ENCODE measurements at regions of chr7 and their contacts with region 1.

Region 1: GRCh38 chr7:76393116-76394031 is 16.1 kb downstream of the SSC4D start:
- DNase-seq: peak; percentile 81
- H3K4me3 ChIP-seq: peak overlapping the region; percentile 29 to 61 (median 54)
- H3K27ac ChIP-seq: peak overlapping the region; percentile 49
- H3K4me1 ChIP-seq: peaks cover 17% of the 10 kb centered on the region
- H3K27me3 ChIP-seq: no peaks in the 10 kb centered on the region
- CTCF ChIP-seq: no peak

Region 2: DNA sequence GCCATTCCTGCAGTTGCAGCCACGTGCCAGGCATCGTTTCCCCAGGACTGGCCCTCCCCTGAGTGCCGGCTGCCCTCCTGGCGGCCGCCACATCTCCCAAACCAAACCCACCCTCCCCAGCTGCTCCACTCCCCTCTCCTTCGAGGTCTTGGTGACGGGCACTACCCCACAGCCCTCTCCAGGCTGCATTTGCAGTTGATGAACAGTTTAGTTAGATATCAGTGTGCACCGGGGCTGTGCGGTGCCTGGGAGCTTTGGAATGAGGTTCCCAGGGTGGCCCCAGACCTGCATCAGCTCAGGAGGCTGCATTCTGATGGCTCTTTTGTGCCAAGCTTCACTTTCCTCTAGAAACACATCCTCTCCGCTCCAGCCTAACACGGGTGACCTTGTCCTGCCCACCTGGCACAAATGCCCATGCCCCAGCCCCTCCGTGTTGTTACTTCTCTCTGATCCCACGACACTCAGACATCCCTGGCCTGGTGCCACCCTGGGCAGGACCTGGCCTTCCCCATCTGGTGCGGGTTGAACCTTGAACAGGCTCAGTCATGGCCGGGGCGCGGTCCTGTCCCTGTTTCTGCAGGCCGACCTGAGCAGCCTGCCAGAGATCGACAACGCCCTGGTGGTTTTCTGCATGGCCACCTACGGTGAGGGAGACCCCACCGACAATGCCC is 413.5 kb before region 1 on chr7:
- CTCF ChIA-PET with region 1: no interaction called
- dilution Hi-C with region 1: no loop called
- in situ Hi-C with region 1: no loop called
- intact Hi-C with region 1: no loop called
- DNase-seq: no peak
- H3K4me3 ChIP-seq: no peak overlapping the region
- H3K27ac ChIP-seq: no peak overlapping the region
- H3K4me1 ChIP-seq: no peaks in the 10 kb centered on the region
- H3K27me3 ChIP-seq: no peaks in the 10 kb centered on the region
- CTCF ChIP-seq: no peak

Region 3: GRCh38 chr7:76423666-76424412 is 30.5 kb after region 1 on chr7:
- CTCF ChIA-PET with region 1: no interaction called
- dilution Hi-C with region 1: no loop called
- in situ Hi-C with region 1: no loop called
- intact Hi-C with region 1: loop called (anchors 2 kb)
- DNase-seq: no peak
- H3K4me3 ChIP-seq: no peak overlapping the region
- H3K27ac ChIP-seq: peak overlapping the region; percentile 96
- H3K4me1 ChIP-seq: peaks cover 28% of the 10 kb centered on the region
- H3K27me3 ChIP-seq: no peaks in the 10 kb centered on the region
- CTCF ChIP-seq: no peak